Right cardiac atrium (tissue), 5 donors: ENCODE measurements at regions of chr4 and their contacts with region 1.

Region 1: GRCh38 chr4:27318743-27319142 is 458.1 kb downstream of the STIM2 start:
- DNase-seq: peak in 2 of 3 donors; percentile 37 to 56
- ATAC-seq: peak; percentile 36 to 38
- H3K4me3 ChIP-seq: no peak overlapping the region
- H3K27ac ChIP-seq: no peak overlapping the region
- H3K4me1 ChIP-seq: no peaks in the 10 kb centered on the region
- H3K27me3 ChIP-seq: no peaks in the 10 kb centered on the region

Region 2: GRCh38 chr4:27057662-27058061 is 261.1 kb before region 1 on chr4:
- intact Hi-C with region 1: loop called in 1 of 4 experiments (anchors 10 kb)
- DNase-seq: no peak
- ATAC-seq: no peak
- H3K4me3 ChIP-seq: no peak overlapping the region
- H3K27ac ChIP-seq: no peak overlapping the region
- H3K4me1 ChIP-seq: no peaks in the 10 kb centered on the region
- H3K27me3 ChIP-seq: peaks cover 2% of the 10 kb centered on the region